Motor neuron (in vitro differentiated cells): ENCODE measurements at regions of chr15 and their contacts with region 1.

Region 1: GRCh38 chr15:95025924-95026728 is 794.8 kb downstream of the MCTP2 start:
- ATAC-seq: peak in 3 of 8 experiments; percentile 83 to 84 (median 84)
- H3K4me3 ChIP-seq: no peak overlapping the region
- H3K27ac ChIP-seq: no peak overlapping the region
- H3K4me1 ChIP-seq: no peaks in the 10 kb centered on the region

Region 2: DNA sequence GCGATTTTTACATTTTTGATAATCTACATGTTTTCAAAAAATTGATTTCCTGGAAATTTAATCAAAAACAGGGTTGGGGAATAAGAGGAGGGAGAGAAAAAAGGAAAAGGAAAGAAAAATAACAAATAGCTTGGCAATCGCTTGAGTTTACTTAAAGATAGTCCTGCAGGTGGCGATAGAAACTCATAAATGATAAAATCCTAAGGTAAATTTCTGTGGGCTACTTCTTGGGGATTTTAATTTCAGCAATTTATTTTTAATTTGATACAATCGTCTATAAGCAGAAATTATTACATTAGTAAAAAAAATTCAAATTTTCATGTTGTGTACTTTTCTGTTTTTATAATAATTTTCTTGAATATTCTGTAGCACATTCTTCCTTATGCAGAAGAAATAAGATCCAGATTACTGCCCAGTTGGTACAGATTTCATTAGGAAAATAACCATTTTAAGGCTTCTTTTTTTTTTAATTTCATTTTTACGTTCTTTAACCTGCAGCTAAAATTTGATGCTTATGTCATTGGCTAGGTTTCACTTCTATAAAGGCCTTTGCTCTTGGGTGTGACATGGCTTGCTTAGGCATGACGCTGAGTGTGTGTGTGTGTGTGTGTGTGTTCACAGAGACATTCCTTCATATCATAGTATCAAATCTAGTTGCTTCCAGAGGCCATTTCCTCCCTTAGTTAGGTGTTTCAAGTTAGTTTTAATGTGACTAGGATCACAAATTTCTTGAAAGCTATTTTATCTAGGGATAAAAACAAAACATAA is 613.0 kb before region 1 on chr15:
- in situ Hi-C with region 1: loop called in 1 of 9 experiments (anchors 25 kb)
- ATAC-seq: peak in 2 of 8 experiments; percentile 39 to 44
- H3K4me3 ChIP-seq: no peak overlapping the region
- H3K27ac ChIP-seq: no peak overlapping the region
- H3K4me1 ChIP-seq: peaks cover 8 to 40% of the 10 kb centered on the region in 2 donors

Region 3: DNA sequence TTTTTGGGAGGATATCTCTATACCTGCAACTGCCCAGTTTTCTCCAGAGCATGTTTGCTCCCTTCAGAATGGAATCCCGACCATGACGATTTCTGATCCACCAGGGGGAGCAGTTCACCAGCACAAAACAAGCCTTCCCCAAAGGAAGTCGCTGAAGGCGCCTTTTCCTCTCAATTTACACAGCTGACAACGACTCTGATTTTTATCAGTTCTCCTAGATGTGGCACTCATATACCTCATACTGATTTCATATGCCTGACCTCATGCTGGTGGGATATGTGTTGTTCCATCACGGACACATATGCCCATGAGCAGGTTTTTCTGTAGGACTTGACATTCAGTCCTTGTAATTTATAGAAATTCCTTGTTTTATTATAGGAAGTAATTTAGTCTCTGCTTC is 233.4 kb after region 1 on chr15:
- in situ Hi-C with region 1: loop called in 1 of 9 experiments (anchors 25 kb)
- ATAC-seq: peak; percentile 79 to 92 (median 86)
- H3K4me3 ChIP-seq: no peak overlapping the region
- H3K27ac ChIP-seq: no peak overlapping the region
- H3K4me1 ChIP-seq: peaks cover 6 to 10% of the 10 kb centered on the region in 2 donors

Region 4: GRCh38 chr15:96330450-96331145 is 1304.5 kb after region 1 on chr15 and contains the start of gene NR2F2:
- in situ Hi-C with region 1: loop called in 1 of 9 experiments (anchors 25 kb)
- ATAC-seq: peak; percentile 60 to 87 (median 80)
- H3K4me3 ChIP-seq: peak within 1 kb of the TSS; percentile 46 to 92 (median 66)
- H3K27ac ChIP-seq: peak within 1 kb of the TSS; percentile 83 to 91
- H3K4me1 ChIP-seq: peaks cover 19 to 24% of the 10 kb centered on the region in 2 donors
- total RNA-seq, gene NR2F2: 7.5 to 28.9 (median 17.4) TPM